Activated CD4-positive, alpha-beta T cell treated with anti-CD3 and anti-CD28 coated beads for 36 hours (primary cell): ENCODE measurements at regions of chr10 and their contacts with region 1.

Region 1: DNA sequence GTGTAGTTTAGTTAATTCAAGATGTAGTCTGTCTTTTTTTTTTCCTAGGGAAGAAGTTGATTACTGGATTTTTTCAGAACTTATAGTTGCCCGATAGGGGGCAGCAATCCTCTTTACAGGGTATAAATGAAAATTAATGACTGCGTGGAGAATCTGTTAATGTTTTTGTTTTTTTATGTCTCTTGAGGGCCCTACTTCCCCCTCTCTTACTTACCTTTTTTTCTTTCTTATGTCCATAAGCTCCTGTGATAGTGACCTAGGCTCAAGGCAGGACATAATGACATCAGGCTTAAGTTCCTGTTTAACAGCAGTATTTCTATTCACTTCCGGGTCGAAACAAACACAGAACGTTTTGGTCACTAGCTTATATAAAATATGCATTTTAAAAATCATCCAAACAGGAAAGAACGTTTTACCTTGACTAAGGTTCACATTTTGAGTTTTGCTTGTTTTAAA is 18.8 kb downstream of the CDC123 start:
- DNase-seq: peak; percentile 62
- ATAC-seq: peak; percentile 44
- H3K4me3 Mint-ChIP-seq: no peak overlapping the region
- H3K27ac Mint-ChIP-seq: peak overlapping the region; percentile 77
- H3K4me1 Mint-ChIP-seq: peaks cover 17% of the 10 kb centered on the region
- H3K27me3 Mint-ChIP-seq: no peaks in the 10 kb centered on the region

Region 2: DNA sequence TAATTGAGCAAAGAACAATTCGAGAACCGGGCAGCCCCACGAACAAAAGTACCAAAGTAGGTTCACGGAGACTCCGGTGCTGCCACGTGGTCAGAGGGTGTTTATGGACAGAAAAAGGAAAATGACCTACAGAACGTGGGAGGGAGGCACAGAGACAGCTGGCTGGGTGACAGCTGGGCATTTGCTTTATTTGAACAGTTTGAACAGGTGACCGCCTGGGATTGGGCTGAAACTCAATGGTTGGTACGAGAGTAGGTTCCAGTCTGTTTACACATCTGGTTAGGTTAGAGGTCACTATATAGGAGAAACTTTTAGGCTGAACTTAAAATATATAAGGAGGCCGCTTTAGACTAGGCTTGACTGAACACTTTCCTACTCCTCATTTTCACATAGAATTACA is 1247.8 kb before region 1 on chr10:
- CTCF ChIA-PET with region 1: no interaction called
- POLR2A ChIA-PET with region 1: no interaction called
- intact Hi-C with region 1: no loop called
- DNase-seq: no peak
- ATAC-seq: no peak
- H3K4me3 Mint-ChIP-seq: no peak overlapping the region
- H3K27ac Mint-ChIP-seq: no peak overlapping the region
- H3K4me1 Mint-ChIP-seq: no peaks in the 10 kb centered on the region
- H3K27me3 Mint-ChIP-seq: peaks cover 11% of the 10 kb centered on the region

Region 3: GRCh38 chr10:12201543-12201942 is 13.2 kb before region 1 on chr10:
- CTCF ChIA-PET with region 1: interaction called, 43 read pairs
- POLR2A ChIA-PET with region 1: no interaction called
- intact Hi-C with region 1: no loop called
- DNase-seq: peak; percentile 37
- ATAC-seq: peak; percentile 81
- H3K4me3 Mint-ChIP-seq: no peak overlapping the region
- H3K27ac Mint-ChIP-seq: peak overlapping the region; percentile 67
- H3K4me1 Mint-ChIP-seq: peaks cover 36% of the 10 kb centered on the region
- H3K27me3 Mint-ChIP-seq: no peaks in the 10 kb centered on the region

Region 4: DNA sequence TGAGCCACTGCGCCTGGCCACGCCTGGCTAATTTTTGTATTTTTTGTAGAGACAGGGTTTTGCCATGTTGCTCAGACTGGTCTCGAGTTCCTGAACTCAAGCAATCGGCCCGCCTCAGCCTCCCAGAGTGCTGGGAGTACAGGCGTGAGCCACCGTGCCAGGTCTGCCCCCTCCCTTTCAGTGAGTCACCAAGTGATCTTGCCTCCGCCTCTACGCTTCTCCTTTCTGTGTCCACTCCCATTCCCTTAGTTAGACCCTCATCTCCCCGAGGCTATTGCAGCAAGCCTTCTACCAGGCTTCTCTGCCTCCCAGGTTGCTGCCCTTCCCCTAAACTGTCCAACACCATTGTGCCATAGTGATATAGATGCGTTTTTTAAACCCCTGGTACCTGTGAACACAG is 14.1 kb after region 1 on chr10:
- CTCF ChIA-PET with region 1: interaction called, 25 read pairs
- POLR2A ChIA-PET with region 1: no interaction called
- intact Hi-C with region 1: no loop called
- DNase-seq: no peak
- ATAC-seq: no peak
- H3K4me3 Mint-ChIP-seq: no peak overlapping the region
- H3K27ac Mint-ChIP-seq: no peak overlapping the region
- H3K4me1 Mint-ChIP-seq: no peaks in the 10 kb centered on the region
- H3K27me3 Mint-ChIP-seq: no peaks in the 10 kb centered on the region

Region 5: GRCh38 chr10:12902135-12902572 is 687.4 kb after region 1 on chr10:
- CTCF ChIA-PET with region 1: no interaction called
- POLR2A ChIA-PET with region 1: no interaction called
- intact Hi-C with region 1: loop called in 1 of 2 experiments (anchors 2 kb)
- DNase-seq: peak; percentile 72
- ATAC-seq: peak; percentile 53
- H3K4me3 Mint-ChIP-seq: no peak overlapping the region
- H3K27ac Mint-ChIP-seq: no peak overlapping the region
- H3K4me1 Mint-ChIP-seq: no peaks in the 10 kb centered on the region
- H3K27me3 Mint-ChIP-seq: peaks cover 11% of the 10 kb centered on the region

Region 6: DNA sequence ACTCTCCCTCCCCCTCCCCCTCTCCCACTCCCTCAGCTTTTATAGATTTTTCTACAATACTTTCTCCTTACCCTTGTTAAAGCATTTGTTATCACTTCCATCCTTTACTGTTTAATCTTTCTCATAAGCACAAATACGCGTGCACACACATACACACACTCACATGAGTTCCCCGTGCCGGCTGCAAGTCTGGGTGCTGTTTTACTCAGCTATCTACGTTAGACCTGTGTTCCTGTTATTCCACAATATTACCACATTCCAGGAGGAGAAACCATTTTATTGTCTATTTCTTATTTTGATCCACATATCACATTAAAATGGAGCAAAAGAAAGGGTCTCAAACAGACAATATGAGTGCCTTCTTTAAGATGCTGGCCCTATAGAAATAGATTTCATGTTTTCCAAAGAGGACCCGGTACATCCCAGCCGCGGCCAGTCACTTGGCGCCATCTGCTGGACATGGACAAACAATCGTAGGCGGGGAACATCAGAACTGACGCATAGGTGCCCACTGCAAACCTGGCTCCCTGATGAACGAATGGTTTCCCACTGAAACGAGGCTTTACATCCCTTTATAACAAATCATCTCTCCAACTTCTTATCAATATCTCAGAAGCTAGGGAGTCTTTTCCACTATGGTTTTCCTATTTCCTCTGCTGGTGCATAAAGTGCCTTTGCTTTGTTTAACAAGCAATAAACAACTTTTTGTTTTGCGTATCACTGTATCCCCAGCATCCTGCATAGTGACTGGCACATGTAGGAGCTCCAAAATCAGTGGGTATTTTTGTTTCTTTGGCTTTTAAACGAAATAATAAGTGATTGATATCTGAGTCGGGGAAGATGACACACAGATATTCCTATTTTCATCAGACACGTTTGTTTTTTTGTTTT is 860.0 kb after region 1 on chr10:
- CTCF ChIA-PET with region 1: interaction called, 4 read pairs
- POLR2A ChIA-PET with region 1: no interaction called
- intact Hi-C with region 1: loop called in 1 of 2 experiments (anchors 10 kb)
- DNase-seq: peak; percentile 84
- ATAC-seq: peak; percentile 80
- H3K4me3 Mint-ChIP-seq: no peak overlapping the region
- H3K27ac Mint-ChIP-seq: no peak overlapping the region
- H3K4me1 Mint-ChIP-seq: no peaks in the 10 kb centered on the region
- H3K27me3 Mint-ChIP-seq: peaks cover 19% of the 10 kb centered on the region